Upper lobe of right lung (tissue), 1 donor: ENCODE measurements at regions of chr1 and their contacts with region 1.

Region 1: DNA sequence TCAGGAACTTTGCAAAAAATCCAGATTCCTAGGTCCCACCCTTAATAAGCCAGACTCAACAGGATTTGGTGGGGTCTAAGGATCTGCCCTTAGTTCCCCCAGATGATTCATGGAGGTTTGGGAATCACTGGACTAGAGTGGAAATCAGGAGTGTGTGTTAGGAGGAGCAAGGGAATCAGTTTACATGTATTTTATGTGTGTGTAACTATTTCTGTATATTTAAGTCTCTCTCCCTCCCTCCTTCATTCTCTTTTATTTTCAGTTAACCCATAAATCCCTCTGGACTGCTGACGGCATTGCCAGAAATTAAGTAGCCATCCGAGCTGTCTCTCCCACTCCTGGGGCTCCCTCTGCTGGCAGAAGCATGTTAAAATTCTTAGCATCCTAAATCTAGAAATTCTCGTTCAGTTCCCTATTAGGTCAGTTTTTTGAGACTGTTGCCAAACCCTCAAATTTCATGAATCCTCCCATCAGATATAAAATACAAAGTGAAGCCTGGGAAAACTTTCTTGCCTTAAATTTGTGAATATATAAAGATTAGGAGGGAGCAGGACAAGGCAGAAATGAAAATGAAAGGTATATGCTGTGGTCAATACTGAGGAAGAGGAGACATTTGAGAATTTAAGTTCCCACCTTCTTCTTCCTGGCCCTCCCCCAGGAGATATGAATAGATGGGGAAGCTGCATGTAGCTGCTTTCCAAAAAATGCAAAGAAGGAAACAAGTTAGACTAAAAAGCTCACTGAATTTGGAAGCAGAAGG is 11.7 kb upstream of the HSD11B1 start:
- DNase-seq: peak; percentile 68
- ATAC-seq: peak; percentile 89
- H3K4me3 ChIP-seq: no peak overlapping the region
- H3K27ac ChIP-seq: no peak overlapping the region
- H3K4me1 ChIP-seq: peaks cover 11% of the 10 kb centered on the region
- H3K27me3 ChIP-seq: no peaks in the 10 kb centered on the region
- CTCF ChIP-seq: peak; percentile 85

Region 2: DNA sequence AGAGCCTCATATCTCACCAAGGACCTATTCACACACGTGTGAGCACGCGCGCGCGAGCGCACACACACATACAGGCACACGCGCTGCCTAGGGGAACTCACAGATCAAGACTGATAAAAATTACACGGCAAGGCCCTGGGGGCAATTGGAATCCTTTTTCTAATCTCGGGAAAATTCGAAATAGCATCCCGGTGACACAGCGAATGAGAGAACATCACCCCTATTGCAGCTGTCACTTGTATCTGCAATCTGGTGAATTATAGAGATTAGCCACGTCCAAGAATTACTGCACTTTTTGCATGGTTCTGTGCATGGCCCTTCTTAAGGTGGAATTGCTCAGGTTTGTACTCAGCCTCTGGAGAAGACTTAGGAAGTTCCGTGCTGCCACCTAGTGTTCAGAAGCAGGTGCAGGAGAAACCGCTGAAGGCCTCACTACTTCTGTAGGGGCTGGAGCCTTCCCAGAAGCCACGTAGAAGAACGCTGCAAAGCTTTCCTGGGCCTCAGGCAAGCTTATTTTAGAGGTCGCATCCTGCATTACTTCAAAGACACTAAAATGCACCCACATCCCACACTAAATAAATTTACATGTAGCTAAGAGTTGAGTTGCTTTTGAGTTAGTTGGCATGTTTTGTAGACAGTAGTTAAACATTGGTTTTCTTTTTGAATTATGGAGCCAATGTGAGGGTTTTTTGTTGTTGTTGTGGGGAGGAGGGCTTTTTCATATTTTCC is 338.6 kb before region 1 on chr1:
- intact Hi-C with region 1: no loop called
- DNase-seq: peak; percentile 71
- ATAC-seq: peak; percentile 96
- H3K4me3 ChIP-seq: no peak overlapping the region
- H3K27ac ChIP-seq: no peak overlapping the region
- H3K4me1 ChIP-seq: no peaks in the 10 kb centered on the region
- H3K27me3 ChIP-seq: no peaks in the 10 kb centered on the region
- CTCF ChIP-seq: peak; percentile 82

Region 3: DNA sequence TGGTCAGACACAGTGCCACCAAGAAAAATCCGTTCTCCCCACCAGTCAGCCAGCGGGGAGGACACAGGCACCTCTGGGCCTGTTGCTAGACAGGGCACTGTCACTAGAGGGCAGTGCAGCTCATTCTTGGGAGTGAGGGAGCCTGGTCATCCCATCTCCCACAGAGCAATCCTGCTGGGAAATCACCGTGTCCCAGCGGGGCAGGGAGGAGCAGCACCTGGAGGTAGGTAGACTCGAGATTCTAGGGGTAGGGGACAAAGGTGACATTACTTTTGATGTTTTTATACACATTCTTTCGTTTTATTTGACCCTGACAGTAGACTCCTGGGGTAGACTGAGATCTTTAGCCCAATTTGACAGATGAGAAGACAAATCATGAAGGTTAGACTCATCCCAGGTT is 116.1 kb before region 1 on chr1:
- intact Hi-C with region 1: loop called (anchors 5 kb)
- DNase-seq: peak; percentile 80
- ATAC-seq: peak; percentile 98
- H3K4me3 ChIP-seq: no peak overlapping the region
- H3K27ac ChIP-seq: no peak overlapping the region
- H3K4me1 ChIP-seq: no peaks in the 10 kb centered on the region
- H3K27me3 ChIP-seq: peaks cover 25% of the 10 kb centered on the region
- CTCF ChIP-seq: peak; percentile 94

Region 4: DNA sequence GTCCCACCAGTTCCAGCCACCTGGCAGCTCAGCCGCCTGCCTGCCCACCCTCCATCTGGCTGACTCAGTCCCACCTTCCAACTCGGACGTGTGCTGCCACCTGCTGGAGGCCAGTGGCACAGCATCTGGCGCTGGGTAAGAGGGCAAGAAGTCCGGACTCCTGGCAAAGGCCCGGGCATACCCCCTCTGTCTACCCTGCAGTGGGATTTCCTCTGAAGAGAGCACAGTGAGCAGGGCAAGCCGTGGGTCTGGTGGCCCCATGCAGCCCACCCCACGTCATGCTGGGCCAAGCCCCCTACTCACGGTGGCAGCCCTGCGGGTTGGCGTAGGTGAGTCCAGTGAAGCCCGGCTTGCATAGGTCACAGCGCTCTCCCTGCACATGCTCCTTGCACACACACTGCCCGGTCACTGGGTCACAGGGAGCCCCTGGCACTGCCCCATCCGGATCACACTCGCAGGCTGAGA is 65.2 kb before region 1 on chr1:
- intact Hi-C with region 1: no loop called
- DNase-seq: peak; percentile 85
- ATAC-seq: peak; percentile 80
- H3K4me3 ChIP-seq: no peak overlapping the region
- H3K27ac ChIP-seq: no peak overlapping the region
- H3K4me1 ChIP-seq: peaks cover 19% of the 10 kb centered on the region
- H3K27me3 ChIP-seq: no peaks in the 10 kb centered on the region
- CTCF ChIP-seq: peak; percentile 96

Region 5: DNA sequence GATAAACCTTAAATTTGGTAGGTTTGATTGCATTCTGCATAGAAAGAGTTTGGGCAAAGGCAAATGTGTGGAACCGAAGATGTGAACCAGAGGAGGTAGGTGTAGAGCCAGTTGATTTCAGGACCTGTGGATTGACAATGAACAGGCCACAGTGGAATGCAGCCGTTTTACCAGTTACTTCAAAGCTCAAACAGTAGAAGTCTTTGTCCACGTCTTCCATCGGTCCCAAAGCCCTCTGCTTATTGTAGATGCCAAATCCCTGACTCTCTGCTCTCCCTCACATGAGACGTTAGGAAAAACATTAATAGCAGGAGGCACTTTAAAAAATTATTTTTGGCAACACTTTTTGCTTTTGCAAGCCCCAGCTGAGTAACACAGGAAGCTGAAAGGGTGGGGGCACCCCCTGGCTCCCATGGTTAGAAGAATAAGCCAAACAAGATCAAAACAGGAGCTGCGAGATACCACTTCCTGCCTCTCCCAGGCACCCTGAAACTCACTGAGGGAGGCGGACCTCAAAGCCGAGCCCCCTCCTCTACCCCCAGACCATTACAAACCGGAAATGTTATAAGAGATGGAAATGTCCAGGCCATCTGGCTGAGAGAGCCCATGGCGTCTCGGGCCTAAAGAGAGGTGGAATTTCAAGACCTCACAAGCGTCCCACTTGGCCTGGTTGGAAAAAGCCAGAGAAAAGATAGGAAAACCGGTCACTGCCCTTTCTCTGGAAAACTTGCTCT is 76.4 kb after region 1 on chr1:
- intact Hi-C with region 1: no loop called
- DNase-seq: peak; percentile 76
- ATAC-seq: peak; percentile 81
- H3K4me3 ChIP-seq: peak overlapping the region; percentile 34
- H3K27ac ChIP-seq: peak overlapping the region; percentile 77
- H3K4me1 ChIP-seq: peaks cover 16% of the 10 kb centered on the region
- H3K27me3 ChIP-seq: no peaks in the 10 kb centered on the region
- CTCF ChIP-seq: no peak